ENCODE measurements at regions of chr15 and their contacts with region 1.

Region 1: DNA sequence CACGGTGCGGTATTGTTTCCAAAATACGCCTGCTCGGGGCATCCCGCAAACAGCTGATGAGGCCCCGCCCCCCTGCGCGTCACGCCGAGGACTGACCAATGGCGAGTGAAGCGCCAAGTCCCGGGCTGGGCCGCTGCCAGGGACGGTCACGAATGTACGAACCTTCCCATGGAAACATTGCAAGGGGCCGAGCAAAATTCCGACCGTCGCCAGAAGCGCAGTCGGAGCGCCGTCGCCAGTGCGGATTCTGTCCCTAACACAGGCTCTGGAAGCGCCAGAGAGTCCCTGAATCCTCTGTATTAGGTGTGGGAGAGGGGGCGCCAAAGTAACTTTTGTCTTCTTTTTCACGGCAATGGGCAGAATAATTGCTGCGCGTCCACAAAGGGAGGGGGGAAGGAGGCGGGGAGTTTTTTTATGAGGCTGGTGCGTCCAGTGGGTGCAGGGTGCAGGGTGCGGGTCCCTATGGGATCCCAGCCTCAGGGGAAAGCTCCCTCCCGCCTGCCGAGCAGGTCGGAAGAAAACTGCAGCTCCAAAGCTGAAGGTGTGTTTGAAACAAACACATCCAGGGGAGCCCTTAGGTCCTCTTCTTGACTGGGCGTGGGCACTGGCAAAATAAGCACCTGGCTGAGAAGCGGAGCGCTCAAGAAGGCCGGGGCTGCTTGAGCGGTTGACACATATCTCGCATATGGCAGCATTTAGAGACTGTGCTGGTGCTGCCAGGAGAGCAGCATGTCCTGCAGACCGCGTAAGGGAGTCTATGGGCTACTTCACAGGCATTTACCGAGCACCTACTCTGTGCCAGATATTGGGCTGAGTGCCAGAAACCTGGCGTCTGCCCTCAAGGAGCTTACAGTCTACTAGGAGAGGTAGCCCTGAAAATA is at the start of gene BMF:
- DNase-seq: peak; percentile 97
- ATAC-seq: peak; percentile 49
- H3K4me3 Mint-ChIP-seq: peak within 1 kb of the TSS; percentile 94
- H3K27ac Mint-ChIP-seq: peak within 1 kb of the TSS; percentile 92
- H3K4me1 Mint-ChIP-seq: peaks cover 60% of the 10 kb centered on the region
- H3K27me3 Mint-ChIP-seq: no peaks in the 10 kb centered on the region
- CTCF ChIP-seq: no peak
- total RNA-seq, gene BMF: 353 and 376 TPM in 2 replicates

Region 2: GRCh38 chr15:39852250-39852649 is 256.8 kb before region 1 on chr15:
- CTCF ChIA-PET with region 1: no interaction called
- POLR2A ChIA-PET with region 1: no interaction called
- intact Hi-C with region 1: no loop called
- DNase-seq: no peak
- ATAC-seq: no peak
- H3K4me3 Mint-ChIP-seq: no peak overlapping the region
- H3K27ac Mint-ChIP-seq: no peak overlapping the region
- H3K4me1 Mint-ChIP-seq: no peaks in the 10 kb centered on the region
- H3K27me3 Mint-ChIP-seq: peaks cover 12% of the 10 kb centered on the region
- CTCF ChIP-seq: no peak

Region 3: GRCh38 chr15:40038638-40039543 is 70.2 kb before region 1 on chr15 and contains the start of gene SRP14:
- CTCF ChIA-PET with region 1: interaction called, 519 read pairs
- POLR2A ChIA-PET with region 1: interaction called, 1,329 read pairs
- intact Hi-C with region 1: loop called (anchors 1 kb)
- DNase-seq: peak; percentile 89
- ATAC-seq: peak; percentile 97
- H3K4me3 Mint-ChIP-seq: peak within 1 kb of the TSS; percentile 99
- H3K27ac Mint-ChIP-seq: peak within 1 kb of the TSS; percentile 95
- H3K4me1 Mint-ChIP-seq: peaks cover 30% of the 10 kb centered on the region
- H3K27me3 Mint-ChIP-seq: no peaks in the 10 kb centered on the region
- CTCF ChIP-seq: no peak
- total RNA-seq, gene SRP14: 183 and 217 TPM in 2 replicates

Region 4: GRCh38 chr15:40064221-40064894 is 44.7 kb before region 1 on chr15:
- CTCF ChIA-PET with region 1: interaction called, 6 read pairs
- POLR2A ChIA-PET with region 1: interaction called, 472 read pairs
- intact Hi-C with region 1: loop called (anchors 1 kb)
- DNase-seq: no peak
- ATAC-seq: peak; percentile 48
- H3K4me3 Mint-ChIP-seq: peak overlapping the region; percentile 5
- H3K27ac Mint-ChIP-seq: peak overlapping the region; percentile 82
- H3K4me1 Mint-ChIP-seq: peaks cover 39% of the 10 kb centered on the region
- H3K27me3 Mint-ChIP-seq: no peaks in the 10 kb centered on the region
- CTCF ChIP-seq: no peak

Region 5: DNA sequence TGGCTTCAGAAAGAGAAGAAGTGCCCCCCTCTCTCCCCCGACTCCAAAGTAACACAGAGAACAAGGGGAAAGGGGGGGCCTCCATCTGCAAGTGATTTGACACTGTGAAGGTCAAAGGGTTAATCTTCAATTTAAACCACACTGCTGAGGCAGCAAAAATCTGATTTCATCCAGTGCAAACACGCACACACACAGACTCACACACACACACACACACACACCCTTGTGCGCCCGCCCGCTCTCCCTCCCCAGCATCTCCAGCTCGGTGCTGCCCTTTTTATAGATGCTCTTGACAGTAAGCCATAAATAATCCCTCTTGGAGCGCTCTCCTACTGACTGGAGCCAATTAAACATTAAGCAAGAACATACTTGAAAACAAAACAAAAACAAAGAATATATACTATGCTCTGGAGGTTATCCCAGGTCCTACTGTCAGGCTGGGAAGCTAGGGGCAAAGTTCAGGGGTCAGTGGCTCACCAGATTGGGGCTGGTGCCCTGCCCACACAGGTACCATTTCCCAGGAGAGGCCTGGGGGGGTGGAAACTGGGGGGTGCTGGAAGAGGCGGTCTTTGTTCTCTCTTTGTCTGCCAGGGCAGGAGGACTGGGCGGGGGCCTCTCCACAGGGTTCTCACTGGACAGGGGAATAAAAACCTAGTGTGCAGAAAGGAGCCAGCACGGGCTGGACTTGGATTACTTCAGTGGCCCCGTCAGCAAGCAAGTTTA is 16.7 kb before region 1 on chr15:
- CTCF ChIA-PET with region 1: interaction called, 98 read pairs
- POLR2A ChIA-PET with region 1: interaction called, 504 read pairs
- intact Hi-C with region 1: loop called (anchors 1 kb)
- DNase-seq: no peak
- ATAC-seq: no peak
- H3K4me3 Mint-ChIP-seq: peak overlapping the region; percentile 48
- H3K27ac Mint-ChIP-seq: peak overlapping the region; percentile 99
- H3K4me1 Mint-ChIP-seq: peaks cover 72% of the 10 kb centered on the region
- H3K27me3 Mint-ChIP-seq: no peaks in the 10 kb centered on the region
- CTCF ChIP-seq: no peak

Region 6: GRCh38 chr15:40182358-40183029 is 73.4 kb after region 1 on chr15:
- CTCF ChIA-PET with region 1: interaction called, 6 read pairs
- POLR2A ChIA-PET with region 1: interaction called, 33 read pairs
- intact Hi-C with region 1: loop called (anchors 1 kb)
- DNase-seq: no peak
- ATAC-seq: no peak
- H3K4me3 Mint-ChIP-seq: peak overlapping the region; percentile 62
- H3K27ac Mint-ChIP-seq: peak overlapping the region; percentile 86
- H3K4me1 Mint-ChIP-seq: peaks cover 41% of the 10 kb centered on the region
- H3K27me3 Mint-ChIP-seq: no peaks in the 10 kb centered on the region
- CTCF ChIP-seq: no peak

Region 7: DNA sequence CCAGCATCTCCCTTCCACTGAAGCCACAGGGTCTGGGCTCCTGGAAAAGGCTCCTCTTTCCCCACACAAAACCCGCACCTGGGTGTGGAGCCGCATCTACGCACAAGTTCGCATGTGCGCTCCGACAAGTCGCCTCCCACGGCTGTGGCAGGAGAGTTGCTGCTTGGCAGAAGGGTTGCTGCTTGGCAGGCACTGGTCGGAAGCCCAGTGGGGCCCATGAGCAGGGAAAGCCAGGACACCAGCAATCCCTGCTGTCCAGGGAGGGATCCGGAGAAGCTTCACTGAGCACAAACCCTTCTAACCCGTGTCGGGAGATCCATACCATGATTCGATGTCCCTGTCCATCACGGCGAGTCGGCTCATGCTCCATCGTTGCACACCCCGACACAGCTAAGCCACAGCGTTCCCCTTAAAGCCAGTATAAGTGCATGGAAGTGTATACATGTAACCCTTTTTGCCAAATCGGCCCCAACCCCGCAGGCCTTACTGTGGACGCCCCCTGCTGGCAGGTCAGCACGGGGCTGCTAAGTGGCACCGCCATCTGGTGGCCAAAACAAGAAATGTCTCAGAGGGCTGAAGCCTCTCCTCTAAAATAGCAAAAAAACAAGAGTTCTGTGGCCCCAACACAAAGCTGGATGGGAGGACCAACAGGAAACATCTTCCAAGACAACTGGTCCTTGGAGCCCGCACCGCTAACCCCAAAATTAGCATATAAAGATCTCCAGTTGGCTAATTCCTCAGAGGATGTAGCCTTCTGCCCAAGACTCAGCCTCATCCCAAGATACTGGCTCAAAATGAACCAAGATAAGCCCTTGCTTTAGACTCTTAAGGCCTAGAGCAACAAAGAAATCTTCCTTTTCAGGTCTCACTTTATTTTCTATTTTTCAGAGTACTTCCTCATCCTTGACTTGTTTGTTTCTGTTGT is 165.5 kb after region 1 on chr15:
- CTCF ChIA-PET with region 1: interaction called, 25 read pairs
- POLR2A ChIA-PET with region 1: interaction called, 8 read pairs
- intact Hi-C with region 1: loop called (anchors 1 kb)
- DNase-seq: peak; percentile 86
- ATAC-seq: peak; percentile 82
- H3K4me3 Mint-ChIP-seq: no peak overlapping the region
- H3K27ac Mint-ChIP-seq: no peak overlapping the region
- H3K4me1 Mint-ChIP-seq: peaks cover 25% of the 10 kb centered on the region
- H3K27me3 Mint-ChIP-seq: peaks cover 2% of the 10 kb centered on the region
- CTCF ChIP-seq: peak; percentile 97

Measured in activated B cell treated with CpG ODN at 0.5 μM for 24 hours (primary cell).